Esophagus muscularis mucosa (tissue), 4 donors: ENCODE measurements at regions of chr3 and their contacts with region 1.

Region 1: DNA sequence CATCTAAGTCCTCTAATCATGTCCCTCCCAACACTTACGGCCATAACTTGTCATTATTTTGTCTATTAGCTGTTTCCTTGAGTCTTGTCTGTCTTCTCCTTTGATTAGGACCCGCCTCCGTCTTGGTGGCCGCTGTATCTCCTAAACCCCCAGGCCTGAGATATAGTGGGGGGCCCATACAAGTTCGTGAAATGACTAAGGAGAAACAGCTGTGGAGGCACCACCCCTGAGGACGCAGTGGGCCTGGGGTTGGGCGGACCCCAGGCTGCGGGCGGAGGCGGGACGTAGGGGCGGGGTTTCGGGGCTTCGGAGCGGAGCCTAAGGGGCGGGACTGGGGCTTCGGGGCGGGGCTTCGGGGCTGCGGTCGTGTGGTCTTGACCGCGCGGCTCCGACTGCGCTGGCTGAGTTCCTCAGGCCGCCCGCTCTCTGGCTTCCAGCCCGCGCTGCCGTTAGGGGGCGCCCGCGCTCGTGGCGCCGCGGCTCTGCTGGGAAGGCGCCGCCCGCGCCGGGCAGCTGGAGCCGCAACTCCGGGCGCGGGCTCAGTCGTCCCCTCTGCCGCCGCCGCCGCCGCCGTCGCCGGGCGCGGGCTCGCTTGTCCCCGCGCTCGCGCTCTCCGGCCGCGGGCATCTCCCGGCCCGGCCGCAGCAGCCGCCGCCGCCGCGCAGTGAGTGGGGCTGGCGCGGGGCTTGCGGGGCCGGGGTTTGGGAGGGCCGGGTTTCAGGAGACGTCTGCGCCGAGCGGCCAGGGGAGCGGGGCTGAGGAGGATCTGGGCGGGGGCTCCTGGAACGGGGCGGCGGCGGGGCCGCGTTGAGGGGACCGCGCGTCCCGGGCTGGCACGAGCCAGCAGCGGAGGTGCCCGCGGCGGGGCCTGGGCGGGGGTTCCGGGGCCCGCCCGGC is at the start of gene KCTD6:
- DNase-seq: peak; percentile 96
- H3K4me3 ChIP-seq: peak within 1 kb of the TSS; percentile 80 to 92 (median 88)
- H3K27ac ChIP-seq: peak within 1 kb of the TSS; percentile 83 to 92 (median 88)
- H3K4me1 ChIP-seq: peaks cover 38 to 66% (median 61%) of the 10 kb centered on the region in 4 donors
- H3K27me3 ChIP-seq: no peaks in the 10 kb centered on the region
- CTCF ChIP-seq: peak; percentile 72 to 85 (median 79)
- EP300 ChIP-seq: no peak
- POLR2A ChIP-seq: no peak
- total RNA-seq, gene KCTD6: 13.6 to 16.8 (median 15.1) TPM

Region 2: DNA sequence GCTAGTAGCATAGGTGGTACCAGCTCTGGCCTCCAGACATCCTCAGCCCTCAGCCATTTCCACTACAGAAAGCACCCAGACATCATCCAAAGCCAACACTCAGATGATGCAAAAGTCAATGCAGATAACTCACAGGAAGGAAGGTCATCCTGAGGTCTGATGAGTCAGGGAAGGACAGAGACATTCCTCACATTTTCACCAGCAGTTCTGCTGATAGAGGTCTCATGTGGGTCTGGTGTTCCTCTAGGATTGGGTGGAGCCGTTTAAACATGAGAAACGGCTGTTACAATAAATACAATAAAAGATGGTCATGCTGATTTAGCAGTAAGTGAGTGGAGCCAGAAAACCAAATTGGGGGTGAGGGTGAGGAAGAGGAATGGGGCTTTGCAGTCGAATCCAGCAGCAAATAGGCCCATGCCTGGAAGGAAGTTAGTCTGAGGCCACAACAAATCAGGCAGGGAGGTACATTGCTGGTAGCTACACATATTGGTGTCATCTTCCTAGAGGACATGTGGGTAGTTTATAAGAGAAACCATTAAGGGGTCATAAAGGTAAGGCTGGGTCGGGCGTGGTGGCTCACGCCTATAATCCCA is 516.9 kb before region 1 on chr3:
- intact Hi-C with region 1: no loop called
- DNase-seq: no peak
- H3K4me3 ChIP-seq: no peak overlapping the region
- H3K27ac ChIP-seq: peak overlapping the region in 2 of 4 donors; percentile 5 to 31
- H3K4me1 ChIP-seq: peaks cover 28 to 44% (median 30%) of the 10 kb centered on the region in 4 donors
- H3K27me3 ChIP-seq: no peaks in the 10 kb centered on the region
- CTCF ChIP-seq: no peak
- EP300 ChIP-seq: no peak
- POLR2A ChIP-seq: no peak

Region 3: GRCh38 chr3:58332575-58333188 is 159.1 kb before region 1 on chr3 and contains the start of gene PXK:
- intact Hi-C with region 1: loop called (anchors 5 kb)
- DNase-seq: no peak
- H3K4me3 ChIP-seq: peak within 1 kb of the TSS; percentile 89 to 95 (median 95)
- H3K27ac ChIP-seq: peak within 1 kb of the TSS; percentile 79 to 82 (median 80)
- H3K4me1 ChIP-seq: peaks cover 17 to 52% (median 44%) of the 10 kb centered on the region in 4 donors
- H3K27me3 ChIP-seq: no peaks in the 10 kb centered on the region
- CTCF ChIP-seq: peak in 2 of 3 experiments; percentile 16 to 46
- EP300 ChIP-seq: no peak
- POLR2A ChIP-seq: no peak
- total RNA-seq, gene PXK: 28.2 to 35.3 (median 30.3) TPM

Region 4: DNA sequence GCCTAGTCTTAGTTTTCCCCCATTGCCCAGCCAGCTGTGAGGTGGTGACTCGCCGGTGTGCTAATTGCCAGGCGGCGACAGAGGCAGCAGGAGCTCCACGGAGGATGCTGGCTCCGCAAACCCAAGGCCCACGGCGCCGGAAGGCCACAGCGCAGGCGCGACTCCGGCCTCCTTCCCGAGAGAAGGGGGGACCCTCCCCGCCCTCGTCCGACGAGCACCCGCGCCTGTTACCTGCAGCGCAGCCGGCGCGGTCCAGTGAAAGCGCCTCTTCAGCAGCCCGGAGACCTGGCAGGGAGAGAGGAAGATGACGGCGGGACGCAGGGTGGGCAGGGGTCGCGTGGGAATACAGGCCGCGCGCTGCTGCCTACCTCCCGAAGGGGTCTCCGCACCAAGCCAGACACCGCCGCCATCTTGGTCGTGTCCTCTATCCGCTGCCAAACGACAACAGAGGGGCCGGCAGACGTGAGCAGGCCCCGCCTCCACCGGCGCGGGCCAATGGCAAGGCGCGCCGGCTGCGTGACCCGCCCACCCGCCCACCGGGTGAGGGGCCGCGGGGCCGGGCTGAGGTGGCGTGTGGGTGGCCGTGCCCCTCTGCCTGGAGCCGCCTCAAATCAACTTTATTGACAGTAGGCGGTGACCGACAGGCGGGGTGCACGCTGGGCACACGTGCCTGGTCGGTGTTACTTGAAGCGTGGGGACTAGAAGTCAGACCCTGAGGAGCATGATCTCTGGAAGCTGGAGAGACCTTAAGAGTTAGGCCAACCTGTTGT is 58.2 kb before region 1 on chr3 and contains the start of gene PDHB:
- intact Hi-C with region 1: loop called (anchors 2 kb)
- DNase-seq: peak; percentile 97
- H3K4me3 ChIP-seq: peak within 1 kb of the TSS; percentile 61 to 79 (median 72)
- H3K27ac ChIP-seq: peak within 1 kb of the TSS; percentile 82 to 95 (median 90)
- H3K4me1 ChIP-seq: peaks cover 26 to 68% (median 59%) of the 10 kb centered on the region in 4 donors
- H3K27me3 ChIP-seq: no peaks in the 10 kb centered on the region
- CTCF ChIP-seq: no peak
- EP300 ChIP-seq: no peak
- POLR2A ChIP-seq: peak; percentile 66
- total RNA-seq, gene PDHB: 100 to 138 (median 122) TPM

Region 5: GRCh38 chr3:58532794-58533220 is 41.1 kb after region 1 on chr3:
- intact Hi-C with region 1: loop called (anchors 5 kb)
- DNase-seq: no peak
- H3K4me3 ChIP-seq: no peak overlapping the region
- H3K27ac ChIP-seq: no peak overlapping the region
- H3K4me1 ChIP-seq: peaks cover 29 to 59% (median 42%) of the 10 kb centered on the region in 4 donors
- H3K27me3 ChIP-seq: no peaks in the 10 kb centered on the region
- CTCF ChIP-seq: peak; percentile 85 to 97 (median 88)
- EP300 ChIP-seq: no peak
- POLR2A ChIP-seq: no peak